CD8-positive, alpha-beta T cell (primary cell): ENCODE measurements at regions of chr2 and their contacts with region 1.

Region 1: DNA sequence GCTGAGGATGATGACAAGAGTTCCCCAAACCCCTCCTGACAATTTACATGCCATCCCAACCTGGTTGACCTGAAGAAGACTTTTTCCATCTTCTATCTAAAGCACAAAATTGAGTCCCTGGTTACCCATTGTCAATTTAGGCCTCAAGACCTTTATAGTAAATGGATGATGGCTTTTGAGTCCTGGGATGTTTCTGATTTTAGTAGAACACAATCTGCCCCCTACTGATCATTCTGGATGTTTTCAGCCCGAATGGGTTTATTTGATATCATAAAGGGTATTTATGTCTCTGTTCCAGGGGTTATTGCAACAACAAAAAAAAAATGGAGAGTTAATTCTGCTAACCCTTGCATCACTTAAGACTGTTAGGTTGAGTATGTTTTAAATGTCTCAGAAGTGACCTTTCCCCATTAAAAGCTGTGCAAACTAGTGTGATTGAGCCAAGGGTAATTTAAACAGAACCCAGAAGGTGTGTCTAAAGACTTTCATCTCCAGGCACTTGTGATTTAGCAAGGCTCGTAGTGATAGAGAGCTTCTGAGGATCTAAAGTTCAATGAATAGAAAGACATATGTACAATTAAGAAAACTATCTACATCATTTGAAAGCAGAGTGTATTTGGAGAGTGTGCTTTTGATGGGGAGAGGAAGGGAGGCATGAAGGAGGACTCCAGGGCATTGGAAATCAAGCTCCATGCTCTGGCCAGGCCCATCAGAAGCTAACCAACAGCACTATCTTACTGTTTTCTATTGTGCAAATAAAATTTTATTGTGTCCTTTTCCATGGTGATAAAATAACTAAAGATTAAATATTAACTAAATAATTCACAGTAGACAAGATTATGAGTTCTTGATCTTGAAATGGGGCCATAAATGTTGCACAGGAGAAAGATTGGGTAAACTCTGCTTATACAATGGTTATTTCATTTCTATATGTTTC is 96.6 kb upstream of the NOSTRIN start:
- DNase-seq: peak in 2 of 9 experiments; percentile 13 to 37
- ATAC-seq: no peak
- H3K4me3 ChIP-seq: no peak overlapping the region
- H3K4me3 Mint-ChIP-seq: no peak overlapping the region
- H3K27ac ChIP-seq: no peak overlapping the region
- H3K27ac Mint-ChIP-seq: no peak overlapping the region
- H3K4me1 ChIP-seq: no peaks in the 10 kb centered on the region
- H3K4me1 Mint-ChIP-seq: peaks cover 2% of the 10 kb centered on the region
- H3K27me3 ChIP-seq: no peaks in the 10 kb centered on the region
- H3K27me3 Mint-ChIP-seq: no peaks in the 10 kb centered on the region
- CTCF ChIP-seq: no peak

Region 2: GRCh38 chr2:168671932-168672331 is 33.9 kb before region 1 on chr2:
- CTCF ChIA-PET with region 1: no interaction called
- POLR2A ChIA-PET with region 1: no interaction called
- intact Hi-C with region 1: no loop called
- DNase-seq: no peak
- ATAC-seq: no peak
- H3K4me3 ChIP-seq: no peak overlapping the region
- H3K4me3 Mint-ChIP-seq: no peak overlapping the region
- H3K27ac ChIP-seq: no peak overlapping the region
- H3K27ac Mint-ChIP-seq: no peak overlapping the region
- H3K4me1 ChIP-seq: peaks cover under 1% of the 10 kb centered on the region
- H3K4me1 Mint-ChIP-seq: peaks cover 19% of the 10 kb centered on the region
- H3K27me3 ChIP-seq: no peaks in the 10 kb centered on the region
- H3K27me3 Mint-ChIP-seq: no peaks in the 10 kb centered on the region
- CTCF ChIP-seq: no peak

Region 3: GRCh38 chr2:168912901-168913369 is 207.1 kb after region 1 on chr2:
- CTCF ChIA-PET with region 1: no interaction called
- POLR2A ChIA-PET with region 1: no interaction called
- intact Hi-C with region 1: loop called in 1 of 2 experiments (anchors 10 kb)
- DNase-seq: no peak
- ATAC-seq: no peak
- H3K4me3 ChIP-seq: no peak overlapping the region
- H3K4me3 Mint-ChIP-seq: peak overlapping the region; percentile 30
- H3K27ac ChIP-seq: no peak overlapping the region
- H3K27ac Mint-ChIP-seq: no peak overlapping the region
- H3K4me1 ChIP-seq: no peaks in the 10 kb centered on the region
- H3K4me1 Mint-ChIP-seq: peaks cover 8% of the 10 kb centered on the region
- H3K27me3 ChIP-seq: no peaks in the 10 kb centered on the region
- H3K27me3 Mint-ChIP-seq: peaks cover 25% of the 10 kb centered on the region
- CTCF ChIP-seq: no peak